ENCODE measurements at regions of chr11 and their contacts with region 1.

Region 1: DNA sequence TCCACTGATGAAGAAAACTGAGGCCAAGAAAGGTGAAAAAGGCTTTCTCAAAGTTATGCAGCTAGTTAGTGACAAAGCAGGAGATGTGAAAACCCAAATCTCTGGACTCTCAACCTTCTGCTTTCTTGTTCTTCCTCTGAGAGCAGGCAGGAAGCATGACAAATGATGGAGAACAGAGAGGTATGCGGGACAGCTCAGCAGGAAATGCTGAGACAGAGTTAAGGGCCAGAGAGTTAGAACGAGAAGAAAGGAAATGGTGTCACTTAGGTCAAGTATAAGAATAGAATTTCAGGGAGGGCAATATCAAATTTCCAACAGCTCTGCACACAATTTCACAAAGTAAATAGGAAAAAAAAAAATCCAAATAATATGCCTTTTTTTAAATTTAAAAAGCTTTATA is 67.6 kb upstream of the ARHGAP42 start:
- DNase-seq: peak; percentile 33
- H3K4me3 ChIP-seq: no peak overlapping the region
- H3K27ac ChIP-seq: no peak overlapping the region
- H3K4me1 ChIP-seq: no peaks in the 10 kb centered on the region
- H3K27me3 ChIP-seq: no peaks in the 10 kb centered on the region
- CTCF ChIP-seq: no peak

Region 2: DNA sequence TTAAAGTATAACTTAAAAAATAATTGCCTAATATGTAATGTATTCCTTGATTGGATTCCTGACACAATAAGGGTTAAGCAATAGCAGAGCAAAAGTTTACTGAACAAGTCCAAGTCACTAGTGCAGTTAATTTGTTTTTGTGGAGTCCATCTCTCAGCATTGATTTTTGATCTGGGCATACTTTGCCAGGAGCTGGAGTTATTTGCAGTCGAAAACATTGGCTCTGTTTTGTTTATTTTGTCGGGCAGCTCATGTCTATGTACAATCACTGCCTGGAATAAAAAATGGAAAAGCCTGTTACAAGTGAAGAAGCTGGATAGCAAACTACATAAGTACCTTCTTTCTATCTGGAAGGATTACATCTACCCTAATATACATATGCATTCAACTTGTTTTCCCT is 973.5 kb before region 1 on chr11:
- CTCF ChIA-PET with region 1: no interaction called
- POLR2A ChIA-PET with region 1: no interaction called
- intact Hi-C with region 1: no loop called
- DNase-seq: no peak
- H3K4me3 ChIP-seq: no peak overlapping the region
- H3K27ac ChIP-seq: no peak overlapping the region
- H3K4me1 ChIP-seq: no peaks in the 10 kb centered on the region
- H3K27me3 ChIP-seq: no peaks in the 10 kb centered on the region
- CTCF ChIP-seq: no peak

Region 3: GRCh38 chr11:100525635-100526034 is 93.8 kb before region 1 on chr11:
- CTCF ChIA-PET with region 1: no interaction called
- POLR2A ChIA-PET with region 1: no interaction called
- intact Hi-C with region 1: no loop called
- DNase-seq: peak; percentile 68
- H3K4me3 ChIP-seq: no peak overlapping the region
- H3K27ac ChIP-seq: no peak overlapping the region
- H3K4me1 ChIP-seq: no peaks in the 10 kb centered on the region
- H3K27me3 ChIP-seq: no peaks in the 10 kb centered on the region
- CTCF ChIP-seq: peak; percentile 80

Region 4: DNA sequence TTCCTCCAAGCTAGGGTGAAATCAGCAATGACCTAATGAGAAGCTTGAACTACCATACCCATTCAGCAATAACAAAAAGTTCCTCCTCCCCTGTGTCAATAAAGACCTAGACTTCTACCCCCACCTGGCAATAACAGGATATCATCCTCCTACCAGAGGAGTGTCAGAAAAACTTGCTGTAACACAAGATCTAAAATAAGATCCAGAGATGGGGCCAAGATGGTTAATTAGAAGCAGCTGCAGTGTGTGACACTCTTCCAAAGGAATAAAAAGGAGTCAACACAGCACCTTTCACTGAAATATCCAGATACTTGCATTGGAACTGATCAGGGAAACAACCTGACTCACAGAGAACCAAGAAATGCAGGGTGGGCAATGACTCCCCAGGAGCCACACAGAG is 16.8 kb before region 1 on chr11:
- CTCF ChIA-PET with region 1: no interaction called
- POLR2A ChIA-PET with region 1: no interaction called
- intact Hi-C with region 1: no loop called
- DNase-seq: no peak
- H3K4me3 ChIP-seq: no peak overlapping the region
- H3K27ac ChIP-seq: no peak overlapping the region
- H3K4me1 ChIP-seq: no peaks in the 10 kb centered on the region
- H3K27me3 ChIP-seq: no peaks in the 10 kb centered on the region
- CTCF ChIP-seq: no peak

Region 5: GRCh38 chr11:100663583-100663982 is 44.1 kb after region 1 on chr11:
- CTCF ChIA-PET with region 1: no interaction called
- POLR2A ChIA-PET with region 1: no interaction called
- intact Hi-C with region 1: no loop called
- DNase-seq: no peak
- H3K4me3 ChIP-seq: no peak overlapping the region
- H3K27ac ChIP-seq: no peak overlapping the region
- H3K4me1 ChIP-seq: no peaks in the 10 kb centered on the region
- H3K27me3 ChIP-seq: no peaks in the 10 kb centered on the region
- CTCF ChIP-seq: no peak

Region 6: GRCh38 chr11:100827934-100828661 is 208.6 kb after region 1 on chr11:
- CTCF ChIA-PET with region 1: interaction called, 12 read pairs
- POLR2A ChIA-PET with region 1: no interaction called
- intact Hi-C with region 1: no loop called
- DNase-seq: peak; percentile 41
- H3K4me3 ChIP-seq: no peak overlapping the region
- H3K27ac ChIP-seq: no peak overlapping the region
- H3K4me1 ChIP-seq: peaks cover 29% of the 10 kb centered on the region
- H3K27me3 ChIP-seq: no peaks in the 10 kb centered on the region
- CTCF ChIP-seq: peak; percentile 29

Measured in A673 (cell line).